Left cardiac atrium (tissue), 4 donors: ENCODE measurements at regions of chr6 and their contacts with region 1.

Region 1: DNA sequence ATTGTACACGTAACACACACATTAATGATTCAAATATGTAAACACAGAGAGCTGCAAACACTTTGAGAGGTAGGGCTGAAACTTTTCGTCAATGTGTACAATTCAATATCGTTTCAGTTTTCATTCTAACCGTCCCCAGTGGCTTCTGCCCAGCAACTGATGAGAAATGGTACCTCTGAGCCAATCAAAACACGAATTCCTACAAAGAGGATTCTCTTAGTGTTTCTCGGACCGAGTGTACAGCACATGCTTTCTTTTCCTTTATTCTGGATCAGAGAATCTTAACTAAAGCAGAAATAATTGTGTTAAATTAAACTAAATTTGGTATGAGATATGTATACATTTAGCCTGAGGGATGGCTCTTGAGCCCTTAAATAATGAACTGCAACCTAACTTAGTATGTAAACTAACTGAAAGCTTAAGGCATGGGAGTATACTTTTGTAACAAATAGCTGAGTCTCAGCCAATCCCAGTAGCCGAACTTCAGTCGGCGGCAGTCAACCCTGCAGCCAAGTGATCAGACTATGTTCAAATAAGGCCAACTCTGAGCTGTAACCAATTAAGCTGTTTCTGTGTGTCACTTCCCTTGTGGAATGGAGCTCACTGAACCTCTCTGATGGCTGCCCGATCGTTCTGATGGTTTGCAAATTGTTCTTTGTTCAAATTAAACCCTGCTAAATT is 16.1 kb downstream of the BTN2A1 start:
- DNase-seq: peak; percentile 77
- ATAC-seq: peak; percentile 96 to 97

Region 2: GRCh38 chr6:26363882-26364701 is 109.8 kb before region 1 on chr6:
- intact Hi-C with region 1: loop called in 1 of 2 experiments (anchors 10 kb)
- DNase-seq: no peak
- ATAC-seq: peak; percentile 21 to 23

Region 3: DNA sequence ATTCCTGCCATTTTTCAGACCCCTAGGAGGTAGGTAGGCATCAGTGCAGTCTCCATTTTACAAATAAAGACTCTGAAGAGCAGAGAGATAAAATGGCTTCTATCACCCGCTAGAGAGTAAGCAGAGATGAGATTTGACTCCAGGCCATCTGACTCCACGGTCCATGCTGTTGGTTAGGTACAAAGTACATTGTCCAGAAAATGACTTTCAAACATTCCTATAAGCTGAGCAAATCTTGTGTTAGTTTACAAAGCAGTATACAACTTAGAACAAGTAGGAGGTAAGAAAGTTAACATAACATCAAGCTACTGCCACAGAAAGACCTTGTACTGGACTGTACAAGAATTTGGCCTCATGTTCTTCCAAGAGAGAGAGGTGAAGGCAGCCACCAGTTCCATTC is 41.1 kb after region 1 on chr6:
- intact Hi-C with region 1: no loop called
- DNase-seq: no peak
- ATAC-seq: no peak